Endothelial cell of umbilical vein (primary cell): ENCODE measurements at regions of chr2 and their contacts with region 1.

Region 1: GRCh38 chr2:68909793-68910674 is 38.8 kb upstream of the BMP10 start:
- DNase-seq: peak; percentile 82
- H3K4me3 ChIP-seq: no peak overlapping the region
- H3K27ac ChIP-seq: no peak overlapping the region
- H3K4me1 ChIP-seq: peaks cover 32% of the 10 kb centered on the region
- H3K27me3 ChIP-seq: peaks cover 4 to 12% of the 10 kb centered on the region in 2 experiments
- CTCF ChIP-seq: peak; percentile 77 to 86
- POLR2A ChIP-seq: no peak

Region 2: DNA sequence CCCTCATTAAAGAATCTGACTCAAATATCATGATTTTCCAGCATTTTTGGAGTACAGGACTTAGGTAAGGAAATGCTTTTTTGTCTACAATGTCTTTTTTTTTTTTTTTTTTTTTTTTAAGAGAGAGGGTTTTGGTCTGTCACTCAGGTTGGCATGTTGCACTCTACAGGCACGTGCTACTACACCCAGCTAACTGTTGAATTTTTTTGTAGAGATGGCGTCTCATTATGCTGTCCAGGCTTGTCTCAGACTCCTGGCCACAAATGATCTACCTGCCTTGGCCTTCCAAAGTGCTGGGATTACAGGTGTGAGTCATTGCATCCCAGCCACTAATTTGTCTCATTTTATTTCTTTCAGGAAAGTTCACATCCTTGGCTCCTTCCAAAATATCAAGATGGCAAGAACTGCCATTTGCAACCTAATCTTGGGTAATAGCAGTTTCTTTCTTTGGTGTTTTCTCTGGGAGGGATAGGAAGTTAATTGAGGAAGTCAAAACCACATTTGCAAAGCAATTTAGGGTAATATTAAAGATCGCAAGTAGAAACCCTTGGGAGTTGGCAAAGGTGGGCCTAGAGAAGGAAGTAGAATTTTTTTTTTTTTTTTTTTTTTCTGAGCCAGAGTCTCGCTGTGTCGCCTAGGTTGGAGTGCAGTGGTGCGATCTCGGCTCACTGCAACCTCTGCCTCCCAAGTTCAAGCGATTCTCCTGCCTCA is 736.9 kb before region 1 on chr2:
- CTCF ChIA-PET with region 1: no interaction called
- POLR2A ChIA-PET with region 1: no interaction called
- dilution Hi-C with region 1: no loop called
- intact Hi-C with region 1: no loop called
- DNase-seq: no peak
- H3K4me3 ChIP-seq: no peak overlapping the region
- H3K27ac ChIP-seq: no peak overlapping the region
- H3K4me1 ChIP-seq: no peaks in the 10 kb centered on the region
- H3K27me3 ChIP-seq: no peaks in the 10 kb centered on the region
- CTCF ChIP-seq: no peak
- POLR2A ChIP-seq: no peak

Region 3: DNA sequence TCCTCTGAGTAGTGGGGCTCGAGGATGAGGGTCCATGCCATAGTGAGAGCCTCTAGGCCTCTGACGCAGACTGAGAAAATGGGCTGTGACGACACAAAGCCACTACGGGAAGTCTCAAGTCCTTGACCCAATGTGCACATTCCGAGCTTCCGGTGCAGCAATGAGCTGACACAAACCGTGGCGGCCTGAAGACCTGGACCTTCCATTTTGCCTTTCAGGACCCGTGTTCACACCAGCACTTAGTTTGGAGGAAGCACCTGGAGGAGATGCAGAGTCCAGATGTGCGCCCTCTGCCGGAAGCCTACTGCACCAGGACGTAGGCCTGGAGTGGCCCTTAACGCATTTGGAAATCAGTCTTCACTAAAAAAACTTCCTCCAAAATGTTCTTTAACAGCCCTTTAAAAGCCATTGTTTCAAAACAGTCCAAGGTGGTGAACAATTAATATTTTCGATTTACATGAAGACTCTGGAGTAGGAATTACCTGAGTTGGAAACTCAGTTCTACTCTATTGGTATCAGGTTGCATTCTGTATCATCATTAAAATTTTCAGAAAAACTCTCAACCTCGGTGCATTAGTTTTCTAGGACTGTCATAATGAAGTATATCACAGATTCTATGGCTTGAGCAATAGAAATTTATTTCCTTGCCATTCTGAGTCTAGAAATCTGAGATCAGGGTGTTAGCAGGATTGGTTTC is 72.7 kb before region 1 on chr2:
- CTCF ChIA-PET with region 1: interaction called, 20 read pairs
- POLR2A ChIA-PET with region 1: no interaction called
- dilution Hi-C with region 1: no loop called
- intact Hi-C with region 1: loop called (anchors 1 kb)
- DNase-seq: peak; percentile 73
- H3K4me3 ChIP-seq: no peak overlapping the region
- H3K27ac ChIP-seq: no peak overlapping the region
- H3K4me1 ChIP-seq: peaks cover 10% of the 10 kb centered on the region
- H3K27me3 ChIP-seq: no peaks in the 10 kb centered on the region
- CTCF ChIP-seq: peak; percentile 60 to 69
- POLR2A ChIP-seq: no peak

Region 4: DNA sequence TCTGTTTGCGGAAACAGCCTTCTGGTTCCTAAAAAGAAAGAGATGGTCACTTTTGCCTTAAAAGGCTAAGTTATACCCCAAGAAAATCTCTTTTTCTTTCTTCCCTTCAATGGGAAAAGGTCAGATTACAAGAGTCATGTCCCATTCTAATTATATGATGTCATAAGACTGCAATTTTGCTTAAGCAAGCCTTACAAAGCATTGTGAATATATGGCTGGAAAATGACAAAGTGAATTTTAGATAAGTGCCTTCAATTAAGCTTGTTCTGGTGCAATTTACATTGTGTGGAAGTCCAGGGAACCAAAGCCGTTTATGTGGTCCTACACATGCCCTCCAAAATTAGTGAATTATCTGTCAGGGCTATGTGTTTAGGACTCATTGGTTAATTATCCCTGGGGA is 31.3 kb before region 1 on chr2:
- CTCF ChIA-PET with region 1: interaction called, 6 read pairs
- POLR2A ChIA-PET with region 1: interaction called, 6 read pairs
- dilution Hi-C with region 1: no loop called
- intact Hi-C with region 1: loop called (anchors 1 kb)
- DNase-seq: peak; percentile 49
- H3K4me3 ChIP-seq: no peak overlapping the region
- H3K27ac ChIP-seq: peak overlapping the region; percentile 78
- H3K4me1 ChIP-seq: peaks cover 33% of the 10 kb centered on the region
- H3K27me3 ChIP-seq: no peaks in the 10 kb centered on the region
- CTCF ChIP-seq: no peak
- POLR2A ChIP-seq: peak; percentile 5

Region 5: GRCh38 chr2:68951899-68952298 is 41.9 kb after region 1 on chr2:
- CTCF ChIA-PET with region 1: no interaction called
- POLR2A ChIA-PET with region 1: no interaction called
- dilution Hi-C with region 1: no loop called
- intact Hi-C with region 1: no loop called
- DNase-seq: no peak
- H3K4me3 ChIP-seq: no peak overlapping the region
- H3K27ac ChIP-seq: no peak overlapping the region
- H3K4me1 ChIP-seq: no peaks in the 10 kb centered on the region
- H3K27me3 ChIP-seq: peaks cover 14 to 27% of the 10 kb centered on the region in 2 experiments
- CTCF ChIP-seq: no peak
- POLR2A ChIP-seq: no peak

Region 6: DNA sequence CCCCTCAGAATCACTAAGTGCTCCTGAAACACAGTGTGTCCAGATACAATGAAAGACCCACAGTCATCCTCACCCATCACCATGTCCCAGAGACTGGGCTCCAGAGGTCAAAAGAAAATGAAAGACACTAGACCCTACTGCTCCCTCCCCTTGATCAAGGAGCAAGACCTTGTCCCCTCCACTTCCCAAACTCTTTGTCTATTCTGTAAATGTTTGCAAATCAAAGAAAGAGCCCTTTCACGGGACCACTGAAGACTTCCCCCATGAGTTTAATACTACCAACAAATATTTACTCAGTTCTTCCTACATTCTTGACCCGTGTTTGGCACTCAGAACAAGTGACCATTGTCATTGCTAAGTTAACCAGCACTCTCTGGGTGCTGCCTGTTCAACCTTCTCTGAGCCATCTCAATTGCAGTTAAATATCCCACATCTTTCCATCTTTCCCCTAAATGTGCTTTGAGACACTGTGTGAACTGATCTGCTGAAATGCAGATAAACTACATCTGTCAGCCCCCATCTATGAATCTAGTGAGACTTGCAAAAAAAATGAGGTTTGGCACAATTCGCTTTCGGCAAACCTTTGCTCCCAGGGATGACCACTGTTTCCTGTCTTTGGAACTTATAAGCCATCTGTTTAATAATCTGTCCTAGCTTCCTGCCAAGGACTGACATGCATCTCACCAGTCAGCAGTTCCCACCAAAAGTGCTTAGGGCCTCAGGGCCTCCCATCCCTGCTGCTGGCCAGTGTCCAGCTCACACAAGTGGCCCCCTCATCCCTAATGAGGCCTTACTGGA is 306.7 kb after region 1 on chr2:
- CTCF ChIA-PET with region 1: no interaction called
- POLR2A ChIA-PET with region 1: no interaction called
- dilution Hi-C with region 1: no loop called
- intact Hi-C with region 1: no loop called
- DNase-seq: no peak
- H3K4me3 ChIP-seq: no peak overlapping the region
- H3K27ac ChIP-seq: no peak overlapping the region
- H3K4me1 ChIP-seq: peaks cover 17% of the 10 kb centered on the region
- H3K27me3 ChIP-seq: no peaks in the 10 kb centered on the region
- CTCF ChIP-seq: no peak
- POLR2A ChIP-seq: no peak

Region 7: GRCh38 chr2:70583091-70583490 is 1673.1 kb after region 1 on chr2:
- CTCF ChIA-PET with region 1: no interaction called
- POLR2A ChIA-PET with region 1: no interaction called
- dilution Hi-C with region 1: no loop called
- intact Hi-C with region 1: no loop called
- DNase-seq: no peak
- H3K4me3 ChIP-seq: no peak overlapping the region
- H3K27ac ChIP-seq: no peak overlapping the region
- H3K4me1 ChIP-seq: no peaks in the 10 kb centered on the region
- H3K27me3 ChIP-seq: peaks cover 10 to 15% of the 10 kb centered on the region in 2 experiments
- CTCF ChIP-seq: no peak
- POLR2A ChIP-seq: no peak